Testis (tissue), 5 donors: ENCODE measurements at regions of chr11 and their contacts with region 1.

Region 1: DNA sequence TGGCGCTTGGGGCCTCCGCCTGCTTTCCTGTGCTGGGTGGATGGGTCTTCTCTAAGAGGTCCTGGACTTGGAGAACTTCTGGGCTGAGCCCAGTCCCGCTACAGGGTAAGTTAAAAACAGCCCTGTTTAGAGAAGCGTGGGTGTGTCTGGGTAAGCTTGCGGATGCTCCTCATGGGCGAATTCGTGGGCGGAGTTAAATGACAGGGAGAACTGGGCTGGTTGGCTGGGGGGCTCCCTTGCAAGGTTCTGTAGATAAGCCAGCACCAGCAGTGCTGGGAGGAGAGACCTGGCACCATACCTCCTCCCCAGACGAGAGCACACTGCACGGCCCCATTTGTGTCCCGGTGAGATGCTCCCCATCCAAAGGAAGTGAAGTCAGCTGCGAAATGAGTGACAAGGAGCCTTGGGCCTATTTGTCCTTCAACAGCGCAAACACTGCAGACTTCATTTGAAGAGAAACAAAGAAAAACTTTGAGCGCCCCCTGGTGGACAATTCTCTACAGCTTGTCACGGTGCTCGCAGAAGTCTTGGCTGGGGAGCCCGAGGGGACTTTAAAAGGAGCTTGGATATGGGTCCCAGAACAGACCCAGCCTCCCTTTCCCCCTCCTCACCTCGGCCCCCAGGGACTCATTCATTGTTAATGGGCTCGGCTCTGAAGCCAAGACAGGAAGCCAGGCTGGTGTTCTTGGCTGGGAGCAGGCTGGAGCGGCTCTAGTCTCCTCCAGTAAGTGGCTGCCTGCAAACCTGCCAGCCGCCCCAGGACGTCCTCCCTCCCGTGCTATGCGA is 39.5 kb downstream of the TP53I11 start:
- DNase-seq: peak; percentile 97
- H3K4me3 ChIP-seq: no peak overlapping the region
- H3K27ac ChIP-seq: no peak overlapping the region
- H3K4me1 ChIP-seq: no peaks in the 10 kb centered on the region
- H3K27me3 ChIP-seq: no peaks in the 10 kb centered on the region
- CTCF ChIP-seq: peak; percentile 86 to 98 (median 90)
- POLR2A ChIP-seq: no peak

Region 2: GRCh38 chr11:44556735-44557409 is 354.4 kb before region 1 on chr11:
- intact Hi-C with region 1: loop called (anchors 5 kb)
- DNase-seq: peak; percentile 77
- H3K4me3 ChIP-seq: no peak overlapping the region
- H3K27ac ChIP-seq: no peak overlapping the region
- H3K4me1 ChIP-seq: peaks cover 6% of the 10 kb centered on the region
- H3K27me3 ChIP-seq: no peaks in the 10 kb centered on the region
- CTCF ChIP-seq: peak; percentile 71 to 81 (median 76)
- POLR2A ChIP-seq: no peak

Region 3: GRCh38 chr11:44694443-44694842 is 216.8 kb before region 1 on chr11:
- intact Hi-C with region 1: no loop called
- DNase-seq: no peak
- H3K4me3 ChIP-seq: no peak overlapping the region
- H3K27ac ChIP-seq: no peak overlapping the region
- H3K4me1 ChIP-seq: no peaks in the 10 kb centered on the region
- H3K27me3 ChIP-seq: no peaks in the 10 kb centered on the region
- CTCF ChIP-seq: no peak
- POLR2A ChIP-seq: no peak

Region 4: GRCh38 chr11:44709966-44710365 is 201.3 kb before region 1 on chr11:
- intact Hi-C with region 1: no loop called
- DNase-seq: no peak
- H3K4me3 ChIP-seq: no peak overlapping the region
- H3K27ac ChIP-seq: no peak overlapping the region
- H3K4me1 ChIP-seq: no peaks in the 10 kb centered on the region
- H3K27me3 ChIP-seq: no peaks in the 10 kb centered on the region
- CTCF ChIP-seq: no peak
- POLR2A ChIP-seq: no peak

Region 5: DNA sequence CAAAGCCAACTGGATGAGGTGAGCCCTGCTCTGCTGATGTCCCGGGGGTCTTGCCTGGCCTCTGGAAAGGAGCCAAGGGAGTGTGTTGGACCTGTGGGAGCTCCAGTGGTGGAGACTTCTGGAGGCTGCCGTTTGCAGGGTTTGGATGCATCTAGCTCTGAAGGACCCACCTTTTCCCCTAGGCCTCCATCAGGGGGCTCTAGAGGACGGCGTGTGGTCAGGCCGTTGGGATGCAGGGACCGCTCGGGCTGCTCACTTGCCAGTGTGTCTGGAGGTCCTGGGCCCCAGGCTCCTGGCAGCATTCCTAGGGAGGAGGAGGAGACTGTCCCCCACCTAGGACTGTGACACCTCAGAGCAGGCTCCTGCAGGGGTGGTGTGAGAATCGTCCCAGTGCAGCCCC is 293.5 kb after region 1 on chr11:
- intact Hi-C with region 1: no loop called
- DNase-seq: no peak
- H3K4me3 ChIP-seq: no peak overlapping the region
- H3K27ac ChIP-seq: no peak overlapping the region
- H3K4me1 ChIP-seq: peaks cover 11% of the 10 kb centered on the region
- H3K27me3 ChIP-seq: no peaks in the 10 kb centered on the region
- CTCF ChIP-seq: no peak
- POLR2A ChIP-seq: no peak